ENCODE measurements at regions of chr6 and their contacts with region 1.

Region 1: GRCh38 chr6:45421709-45422502 is 44.2 kb upstream of the SUPT3H start:
- DNase-seq: peak; percentile 65
- H3K4me3 Mint-ChIP-seq: peak overlapping the region; percentile 99
- H3K27ac Mint-ChIP-seq: peak overlapping the region; percentile 98
- H3K4me1 Mint-ChIP-seq: peaks cover 42% of the 10 kb centered on the region
- H3K27me3 Mint-ChIP-seq: peaks cover 2% of the 10 kb centered on the region

Region 2: DNA sequence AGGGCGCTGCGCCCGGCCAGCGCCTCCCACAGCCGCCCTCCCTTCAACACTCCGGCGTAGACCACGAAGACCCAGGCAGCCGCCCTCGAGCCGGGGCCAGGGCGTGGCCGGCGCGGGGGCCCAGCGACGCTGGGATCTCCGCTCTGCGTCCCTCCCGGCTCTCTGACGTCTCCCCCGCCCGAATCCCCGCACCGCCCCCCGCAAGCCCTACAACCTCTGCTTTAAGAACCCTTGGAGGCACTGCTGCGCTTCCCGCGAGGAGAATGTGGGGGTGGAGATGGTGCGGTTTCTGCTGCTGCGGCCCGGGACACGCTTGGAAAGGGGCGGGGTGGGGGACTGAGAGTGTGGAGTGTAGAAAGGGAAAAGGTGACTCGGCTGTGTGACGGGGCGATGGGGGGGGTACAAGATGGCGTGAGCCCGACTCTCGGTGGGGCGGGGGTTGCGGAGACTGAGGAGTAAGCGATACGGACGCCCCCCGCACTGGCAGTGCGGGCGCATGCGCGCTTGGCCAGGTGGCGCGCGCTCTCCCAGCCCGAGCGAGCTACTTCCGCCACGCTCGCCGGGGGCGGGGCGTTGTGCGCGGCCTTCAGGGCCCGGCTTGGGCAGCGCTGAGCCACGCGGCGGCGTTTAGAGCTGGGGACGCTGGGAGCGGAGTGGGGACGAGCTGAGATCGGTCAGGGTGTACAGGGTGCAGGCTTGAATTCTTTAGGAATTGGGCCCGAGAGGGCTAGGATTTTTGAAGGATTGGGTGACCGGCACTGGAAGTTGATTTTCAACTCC is 44.2 kb before region 1 on chr6 and contains the start of gene SUPT3H:
- CTCF ChIA-PET with region 1: interaction called, 14 read pairs
- POLR2A ChIA-PET with region 1: interaction called, 44 read pairs
- DNase-seq: peak; percentile 90
- H3K4me3 Mint-ChIP-seq: peak within 1 kb of the TSS; percentile 92
- H3K27ac Mint-ChIP-seq: peak within 1 kb of the TSS; percentile 95
- H3K4me1 Mint-ChIP-seq: peaks cover 27% of the 10 kb centered on the region
- H3K27me3 Mint-ChIP-seq: no peaks in the 10 kb centered on the region
- total RNA-seq, gene SUPT3H: 7.4 to 9.7 TPM

Region 3: GRCh38 chr6:45436544-45437438 is 14.9 kb after region 1 on chr6:
- CTCF ChIA-PET with region 1: interaction called, 3 read pairs
- POLR2A ChIA-PET with region 1: interaction called, 91 read pairs
- DNase-seq: peak; percentile 44
- H3K4me3 Mint-ChIP-seq: peak overlapping the region; percentile 65
- H3K27ac Mint-ChIP-seq: peak overlapping the region; percentile 89
- H3K4me1 Mint-ChIP-seq: peaks cover 86% of the 10 kb centered on the region
- H3K27me3 Mint-ChIP-seq: no peaks in the 10 kb centered on the region